HEK293T (cell line): ENCODE measurements at regions of chrX and their contacts with region 1.

Region 1: GRCh38 chrX:43286331-43286730 is 369.8 kb upstream of the MAOA start:
- DNase-seq: no peak

Region 2: DNA sequence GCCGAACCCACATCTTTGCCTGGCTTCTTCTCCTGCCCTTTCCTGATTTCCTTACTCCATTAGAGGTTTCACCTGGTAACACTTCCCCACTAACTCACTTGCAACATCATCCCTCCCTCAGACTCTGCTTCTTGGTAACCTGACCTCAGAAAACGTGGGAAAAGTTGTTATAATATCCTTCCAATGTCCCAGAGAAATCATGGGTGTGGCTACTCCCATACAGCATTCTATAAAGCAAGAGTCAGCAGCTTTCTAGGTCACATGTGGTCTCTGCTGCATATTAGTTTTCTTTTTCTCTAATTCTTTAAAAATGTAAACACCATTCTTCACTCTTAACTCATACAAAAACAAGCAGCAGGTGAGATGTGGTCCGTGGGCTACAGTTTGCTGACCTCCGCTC is 86.7 kb after region 1 on chrX:
- CTCF ChIA-PET with region 1: no interaction called
- POLR2A ChIA-PET with region 1: no interaction called
- DNase-seq: no peak

Region 3: GRCh38 chrX:43728002-43728401 is 441.7 kb after region 1 on chrX:
- CTCF ChIA-PET with region 1: interaction called, 10 read pairs
- POLR2A ChIA-PET with region 1: no interaction called
- DNase-seq: no peak